ENCODE measurements at regions of chr1 and their contacts with region 1.

Region 1: DNA sequence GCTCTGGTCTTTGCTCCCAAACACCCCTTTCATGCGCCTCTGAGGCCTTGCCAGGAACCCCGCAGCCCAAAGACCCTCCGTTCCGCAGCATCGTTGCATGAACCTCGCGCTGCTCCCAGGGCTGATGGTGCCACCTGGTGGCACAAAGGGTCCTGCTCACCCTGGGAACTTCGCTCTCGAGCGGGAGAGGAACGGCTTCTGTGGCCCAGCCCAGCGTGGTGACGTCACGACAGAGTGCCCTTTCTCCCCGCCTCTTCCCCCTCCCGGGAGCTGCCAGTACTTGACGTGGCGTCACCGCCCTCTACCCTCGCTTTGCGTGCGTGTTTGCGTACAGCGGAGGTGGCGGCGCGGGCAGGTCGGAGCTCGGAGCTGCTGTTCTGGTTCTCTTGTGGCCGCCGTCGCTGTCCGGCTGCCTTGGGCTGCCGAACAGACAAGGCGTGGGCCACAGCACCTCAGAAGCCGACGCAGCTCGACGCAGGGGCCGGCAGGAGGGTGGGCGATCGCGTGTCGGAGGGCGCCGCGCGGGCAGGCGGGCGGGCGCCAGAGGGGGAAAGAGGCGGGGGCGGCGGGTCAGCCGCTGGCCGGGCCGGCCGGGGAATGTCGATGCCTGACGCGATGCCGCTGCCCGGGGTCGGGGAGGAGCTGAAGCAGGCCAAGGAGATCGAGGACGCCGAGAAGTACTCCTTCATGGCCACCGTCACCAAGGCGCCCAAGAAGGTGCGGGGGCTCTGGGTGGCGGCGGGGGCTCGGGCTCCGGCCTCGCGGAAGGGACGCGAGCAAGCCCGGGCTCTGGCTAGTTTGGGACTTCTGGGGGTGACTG is at the start of gene AHCYL1:
- DNase-seq: peak; percentile 98
- H3K4me3 ChIP-seq: peak within 1 kb of the TSS; percentile 87
- H3K27ac ChIP-seq: peak within 1 kb of the TSS; percentile 59
- H3K4me1 ChIP-seq: peaks cover 86% of the 10 kb centered on the region
- H3K27me3 ChIP-seq: no peaks in the 10 kb centered on the region
- CTCF ChIP-seq: peak; percentile 99
- total RNA-seq, gene AHCYL1: 143 and 147 TPM in 2 replicates

Region 2: GRCh38 chr1:109643385-109644230 is 341.1 kb before region 1 on chr1:
- CTCF ChIA-PET with region 1: interaction called, 22 read pairs
- POLR2A ChIA-PET with region 1: no interaction called
- intact Hi-C with region 1: loop called (anchors 2 kb)
- DNase-seq: peak; percentile 78 to 85
- H3K4me3 ChIP-seq: peak overlapping the region; percentile 38; the same call in 1 of the 2 replicates
- H3K27ac ChIP-seq: no peak overlapping the region
- H3K4me1 ChIP-seq: peaks cover 10% of the 10 kb centered on the region
- H3K27me3 ChIP-seq: no peaks in the 10 kb centered on the region
- CTCF ChIP-seq: peak; percentile 96

Region 3: GRCh38 chr1:109773146-109773899 is 211.3 kb before region 1 on chr1:
- CTCF ChIA-PET with region 1: interaction called, 23 read pairs
- POLR2A ChIA-PET with region 1: no interaction called
- intact Hi-C with region 1: loop called (anchors 1 kb)
- DNase-seq: peak; percentile 78 to 82
- H3K4me3 ChIP-seq: no peak overlapping the region
- H3K27ac ChIP-seq: no peak overlapping the region
- H3K4me1 ChIP-seq: peaks cover 46% of the 10 kb centered on the region
- H3K27me3 ChIP-seq: no peaks in the 10 kb centered on the region
- CTCF ChIP-seq: peak; percentile 97

Region 4: GRCh38 chr1:109821221-109821669 is 163.4 kb before region 1 on chr1:
- CTCF ChIA-PET with region 1: interaction called, 3 read pairs
- POLR2A ChIA-PET with region 1: interaction called, 6 read pairs
- intact Hi-C with region 1: loop called (anchors 1 kb)
- DNase-seq: peak; percentile 88 to 97
- H3K4me3 ChIP-seq: no peak overlapping the region
- H3K27ac ChIP-seq: peak overlapping the region; percentile 85
- H3K4me1 ChIP-seq: peaks cover 61% of the 10 kb centered on the region
- H3K27me3 ChIP-seq: no peaks in the 10 kb centered on the region
- CTCF ChIP-seq: no peak

Region 5: DNA sequence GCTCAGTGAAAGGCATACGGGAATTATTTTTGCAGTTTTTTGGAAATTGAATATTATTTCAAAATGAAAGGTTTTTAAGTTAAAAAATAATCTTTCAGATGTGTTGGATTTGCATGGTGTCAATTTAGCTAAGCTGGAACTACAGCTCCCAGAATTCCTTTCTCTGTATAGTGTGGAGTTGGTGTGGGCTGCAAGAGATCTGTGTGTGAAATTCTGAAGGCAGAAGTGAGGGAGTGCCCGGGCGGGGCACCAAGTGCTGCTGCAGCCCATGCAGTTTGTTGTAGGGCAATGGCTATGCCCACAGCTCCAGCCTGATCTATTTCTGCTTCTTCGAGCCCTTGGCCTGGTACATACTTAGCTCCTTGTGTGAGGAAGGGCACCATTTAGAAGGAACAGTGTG is 134.5 kb before region 1 on chr1:
- CTCF ChIA-PET with region 1: no interaction called
- POLR2A ChIA-PET with region 1: no interaction called
- intact Hi-C with region 1: no loop called
- DNase-seq: no peak
- H3K4me3 ChIP-seq: no peak overlapping the region
- H3K27ac ChIP-seq: 0 out of 2 replicates have a peak overlapping the region, but pooled peaks have one; percentile 0
- H3K4me1 ChIP-seq: peaks cover 31% of the 10 kb centered on the region
- H3K27me3 ChIP-seq: no peaks in the 10 kb centered on the region
- CTCF ChIP-seq: no peak

Region 6: GRCh38 chr1:110003747-110004630 is 19.3 kb after region 1 on chr1:
- CTCF ChIA-PET with region 1: no interaction called
- POLR2A ChIA-PET with region 1: interaction called, 4 read pairs
- intact Hi-C with region 1: loop called (anchors 1 kb)
- DNase-seq: peak; percentile 82 to 100
- H3K4me3 ChIP-seq: peak overlapping the region; percentile 60
- H3K27ac ChIP-seq: peak overlapping the region; percentile 95
- H3K4me1 ChIP-seq: peaks cover 76% of the 10 kb centered on the region
- H3K27me3 ChIP-seq: no peaks in the 10 kb centered on the region
- CTCF ChIP-seq: no peak

Region 7: GRCh38 chr1:110106013-110106941 is 121.6 kb after region 1 on chr1:
- CTCF ChIA-PET with region 1: no interaction called
- POLR2A ChIA-PET with region 1: no interaction called
- intact Hi-C with region 1: no loop called
- DNase-seq: peak; percentile 60 to 70
- H3K4me3 ChIP-seq: no peak overlapping the region
- H3K27ac ChIP-seq: 0 out of 2 replicates have a peak overlapping the region, but pooled peaks have one; percentile 99
- H3K4me1 ChIP-seq: peaks cover 84% of the 10 kb centered on the region
- H3K27me3 ChIP-seq: no peaks in the 10 kb centered on the region
- CTCF ChIP-seq: peak; percentile 98

Region 8: GRCh38 chr1:110136911-110137310 is 152.2 kb after region 1 on chr1:
- CTCF ChIA-PET with region 1: no interaction called
- POLR2A ChIA-PET with region 1: no interaction called
- intact Hi-C with region 1: no loop called
- DNase-seq: no peak
- H3K4me3 ChIP-seq: no peak overlapping the region
- H3K27ac ChIP-seq: no peak overlapping the region
- H3K4me1 ChIP-seq: peaks cover 29% of the 10 kb centered on the region
- H3K27me3 ChIP-seq: no peaks in the 10 kb centered on the region; the same call in 1 of the 2 replicates
- CTCF ChIP-seq: no peak